Activated CD4-positive, alpha-beta T cell treated with anti-CD3 and anti-CD28 coated beads for 36 hours (primary cell): ENCODE measurements at regions of chr7 and their contacts with region 1.

Region 1: DNA sequence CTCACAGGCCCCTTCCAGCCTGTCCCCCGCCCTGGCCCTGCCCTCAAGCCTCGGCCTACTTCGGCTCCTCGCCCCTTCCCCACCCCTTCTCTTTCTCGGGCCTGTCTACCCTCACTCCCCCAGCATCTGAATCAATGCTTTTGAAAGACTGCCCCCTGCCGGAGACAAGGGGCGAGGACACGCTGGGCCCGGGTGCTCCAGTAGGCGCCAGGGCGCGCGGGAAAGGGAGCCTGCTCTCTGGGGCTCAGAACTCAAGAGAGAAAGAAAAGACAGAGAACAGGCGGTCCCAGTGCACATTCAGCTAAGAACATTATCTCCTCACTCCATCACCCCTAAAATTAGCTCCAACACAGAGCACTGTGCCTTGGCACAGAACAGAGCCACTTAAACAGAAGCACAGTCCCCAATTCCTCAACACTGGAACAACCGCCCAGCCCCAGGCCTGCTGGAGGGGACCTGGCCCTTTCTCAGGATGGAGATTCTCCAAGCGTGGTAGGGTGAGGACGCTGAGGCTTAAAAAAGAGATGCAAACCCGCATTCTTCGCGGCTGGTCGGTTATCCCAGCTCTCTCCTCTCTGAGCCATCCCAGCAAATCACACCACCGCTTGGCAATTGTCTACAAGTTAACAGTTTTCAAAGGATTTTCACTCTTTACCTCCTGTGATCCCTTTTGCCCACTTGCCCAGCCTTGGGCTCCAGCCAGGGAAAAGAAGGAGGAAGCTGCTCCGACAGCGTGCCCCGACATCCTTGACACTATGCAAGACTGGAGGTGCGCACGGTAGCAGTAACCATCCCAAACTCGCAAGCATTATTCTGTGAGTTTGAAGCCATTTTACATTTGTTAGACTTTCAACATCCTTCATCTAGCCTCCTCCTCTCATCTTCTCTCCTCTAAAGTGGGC is 2.1 kb downstream of the GIGYF1 start:
- DNase-seq: peak; percentile 92
- ATAC-seq: peak; percentile 78
- H3K4me3 Mint-ChIP-seq: peak overlapping the region; percentile 89
- H3K27ac Mint-ChIP-seq: peak overlapping the region; percentile 88
- H3K4me1 Mint-ChIP-seq: peaks cover 48% of the 10 kb centered on the region
- H3K27me3 Mint-ChIP-seq: no peaks in the 10 kb centered on the region

Region 2: DNA sequence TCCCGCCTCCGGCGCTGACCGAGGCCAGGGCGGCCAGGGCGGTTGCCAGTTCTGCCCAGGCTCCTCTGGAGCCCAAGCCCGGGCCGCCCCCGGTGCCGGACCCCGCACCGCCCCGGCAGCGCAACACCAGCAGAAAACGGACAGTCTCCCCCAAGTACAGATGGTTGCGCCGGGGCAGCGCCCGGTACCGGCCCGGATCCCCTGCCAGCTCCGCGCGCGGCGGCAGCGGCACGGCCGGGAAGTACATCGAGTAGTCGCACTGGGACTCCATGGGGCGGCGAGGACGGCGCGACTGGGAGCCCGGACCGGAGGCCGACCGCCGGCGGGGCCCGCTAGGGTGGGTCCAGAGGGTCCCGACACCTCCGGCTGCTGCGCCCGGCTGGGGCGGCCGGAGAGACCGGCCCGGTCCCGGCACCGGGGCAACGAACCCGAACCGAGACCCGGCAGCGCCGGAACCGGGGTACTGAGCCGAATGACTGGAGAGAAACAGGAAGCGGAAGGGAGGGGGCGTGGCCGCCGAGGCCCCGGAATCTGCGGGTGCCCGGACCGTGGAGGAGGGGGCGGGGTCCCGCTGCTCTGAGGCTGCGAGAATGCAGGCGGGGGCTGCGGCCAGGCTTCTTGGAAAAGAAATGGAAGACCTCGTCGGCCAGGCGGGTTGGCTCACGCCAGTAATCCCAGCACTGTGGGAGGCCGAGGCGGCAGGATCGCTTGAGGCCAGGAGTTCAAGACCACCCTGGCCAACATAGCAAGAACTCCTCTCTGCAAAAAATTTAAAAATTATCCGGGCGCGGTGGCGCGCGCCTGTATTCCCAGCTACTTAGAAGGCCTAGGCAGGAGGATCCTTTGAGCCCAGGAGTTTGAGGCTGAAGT is 533.5 kb before region 1 on chr7 and contains the start of gene TRAPPC14:
- CTCF ChIA-PET with region 1: no interaction called
- POLR2A ChIA-PET with region 1: no interaction called
- intact Hi-C with region 1: loop called in 1 of 2 experiments (anchors 5 kb)
- DNase-seq: peak; percentile 96
- ATAC-seq: peak; percentile 82
- H3K4me3 Mint-ChIP-seq: peak within 1 kb of the TSS; percentile 76
- H3K27ac Mint-ChIP-seq: peak within 1 kb of the TSS; percentile 84
- H3K4me1 Mint-ChIP-seq: peaks cover 51% of the 10 kb centered on the region
- H3K27me3 Mint-ChIP-seq: no peaks in the 10 kb centered on the region
- total RNA-seq, gene TRAPPC14: 15.0 to 17.6 TPM

Region 3: GRCh38 chr7:100478966-100479665 is 212.8 kb before region 1 on chr7 and contains the start of gene TSC22D4:
- CTCF ChIA-PET with region 1: interaction called, 3 read pairs
- POLR2A ChIA-PET with region 1: no interaction called
- intact Hi-C with region 1: loop called in 1 of 2 experiments (anchors 2 kb)
- DNase-seq: peak; percentile 96
- ATAC-seq: peak; percentile 79
- H3K4me3 Mint-ChIP-seq: peak within 1 kb of the TSS; percentile 92
- H3K27ac Mint-ChIP-seq: peak within 1 kb of the TSS; percentile 94
- H3K4me1 Mint-ChIP-seq: peaks cover 41% of the 10 kb centered on the region
- H3K27me3 Mint-ChIP-seq: no peaks in the 10 kb centered on the region
- total RNA-seq, gene TSC22D4: 78.5 to 85.7 TPM

Region 4: GRCh38 chr7:100563809-100564400 is 128.0 kb before region 1 on chr7:
- CTCF ChIA-PET with region 1: interaction called, 6 read pairs
- POLR2A ChIA-PET with region 1: no interaction called
- intact Hi-C with region 1: loop called (anchors 1 kb)
- DNase-seq: peak; percentile 91
- ATAC-seq: peak; percentile 69
- H3K4me3 Mint-ChIP-seq: no peak overlapping the region
- H3K27ac Mint-ChIP-seq: no peak overlapping the region
- H3K4me1 Mint-ChIP-seq: peaks cover 24% of the 10 kb centered on the region
- H3K27me3 Mint-ChIP-seq: no peaks in the 10 kb centered on the region

Region 5: GRCh38 chr7:100626530-100627237 is 65.2 kb before region 1 on chr7:
- CTCF ChIA-PET with region 1: interaction called, 10 read pairs
- POLR2A ChIA-PET with region 1: no interaction called
- intact Hi-C with region 1: loop called (anchors 2 to 5 kb)
- DNase-seq: peak; percentile 96
- ATAC-seq: peak; percentile 99
- H3K4me3 Mint-ChIP-seq: peak overlapping the region; percentile 71
- H3K27ac Mint-ChIP-seq: peak overlapping the region; percentile 47
- H3K4me1 Mint-ChIP-seq: peaks cover 13% of the 10 kb centered on the region
- H3K27me3 Mint-ChIP-seq: no peaks in the 10 kb centered on the region

Region 6: DNA sequence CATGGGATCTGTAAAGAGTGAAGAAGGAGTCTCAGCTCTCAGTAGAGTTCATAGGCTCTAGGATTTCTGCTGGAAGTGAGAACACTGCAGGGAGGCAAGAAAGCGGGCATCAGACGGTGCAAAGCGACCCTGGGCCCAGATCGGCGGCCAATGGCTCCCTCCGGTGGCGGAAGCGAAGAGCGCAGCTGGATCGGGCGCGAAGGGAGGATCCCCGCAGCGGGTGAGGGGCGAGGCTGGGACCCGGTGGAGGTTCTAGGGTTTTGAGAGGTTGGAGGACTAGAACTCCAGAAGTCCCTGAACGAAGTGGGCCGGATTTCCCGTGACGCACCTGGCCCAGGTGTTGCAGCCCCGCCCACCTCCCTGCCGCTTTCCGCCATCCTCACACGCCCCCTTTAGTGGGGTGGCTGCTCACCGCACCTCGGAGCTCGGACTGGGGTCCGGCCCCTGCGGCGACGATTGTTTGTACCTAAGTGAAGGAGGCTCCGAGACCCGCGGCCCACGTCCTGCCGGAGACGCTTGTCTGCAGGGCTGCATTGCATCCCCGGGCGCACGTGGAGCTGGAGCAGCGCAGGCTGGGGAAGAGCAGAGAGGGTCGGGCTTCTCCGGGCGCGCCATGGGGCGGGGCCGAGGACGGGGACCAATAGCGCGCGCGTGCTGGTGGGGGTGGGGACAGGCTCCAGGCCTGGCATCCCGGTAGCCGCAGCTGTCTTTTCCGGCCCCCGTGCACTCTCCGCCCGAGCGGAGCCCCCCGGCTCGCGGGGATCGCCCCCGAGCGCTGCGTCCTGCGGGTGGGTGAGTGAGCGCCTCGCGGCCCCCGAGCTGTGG is 160.3 kb after region 1 on chr7 and contains the start of gene SLC12A9:
- CTCF ChIA-PET with region 1: interaction called, 6 read pairs
- POLR2A ChIA-PET with region 1: interaction called, 6 read pairs
- intact Hi-C with region 1: loop called in 1 of 2 experiments (anchors 1 kb)
- DNase-seq: peak; percentile 93
- ATAC-seq: peak; percentile 98
- H3K4me3 Mint-ChIP-seq: peak within 1 kb of the TSS; percentile 87
- H3K27ac Mint-ChIP-seq: peak within 1 kb of the TSS; percentile 91
- H3K4me1 Mint-ChIP-seq: peaks cover 11% of the 10 kb centered on the region
- H3K27me3 Mint-ChIP-seq: no peaks in the 10 kb centered on the region
- total RNA-seq, gene SLC12A9: 13.6 to 15.6 TPM